Common myeloid progenitor, CD34-positive (primary cell): ENCODE measurements at regions of chr14 and their contacts with region 1.

Region 1: DNA sequence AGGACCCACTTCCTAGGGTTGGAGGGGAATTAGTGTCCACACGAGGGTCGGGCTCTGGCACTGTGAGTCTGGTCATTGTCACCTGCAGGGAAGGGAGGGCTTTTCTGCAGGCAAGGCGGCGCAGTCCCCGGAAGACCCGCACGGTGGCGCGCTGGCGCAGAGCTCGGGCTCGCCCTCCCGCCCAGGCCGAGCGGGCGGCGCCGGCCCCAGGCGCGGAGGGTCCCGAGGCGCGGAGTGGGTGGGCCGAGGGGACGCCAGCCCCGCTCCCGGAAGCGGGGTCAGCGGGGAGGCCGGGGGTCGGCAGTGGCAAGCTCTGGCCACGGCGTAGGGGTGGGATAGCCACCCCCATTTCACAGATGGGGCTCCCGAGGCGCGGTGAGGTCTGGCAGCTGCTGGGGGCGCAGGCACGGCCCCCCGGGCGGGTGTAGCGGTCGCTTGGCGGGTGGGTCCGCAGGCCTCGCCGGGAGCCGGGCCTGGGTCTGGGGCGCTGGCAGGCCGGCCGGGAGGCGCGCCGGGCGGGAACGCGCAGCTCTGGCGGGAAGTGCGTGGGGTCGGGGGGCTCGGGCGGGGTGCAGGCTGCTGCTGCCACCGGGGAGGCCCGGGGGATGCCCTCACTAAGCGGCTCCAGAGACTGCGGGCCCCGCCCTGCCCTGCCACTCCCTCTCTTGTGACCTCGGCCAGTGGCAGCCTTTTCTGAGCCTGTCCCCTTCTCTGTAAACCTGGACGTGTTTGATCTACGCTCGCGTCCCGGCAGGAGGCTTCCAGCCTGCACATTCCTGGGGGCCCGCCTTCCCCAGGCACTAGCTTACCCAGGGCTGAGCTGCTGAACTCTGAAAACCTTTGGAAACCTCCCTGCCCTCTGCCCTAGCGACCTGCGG is 46.1 kb downstream of the CYP46A1 start:
- DNase-seq: peak in 2 of 3 donors; percentile 50 to 57
- H3K4me3 ChIP-seq: peak overlapping the region in 1 of 7 experiments; percentile 42
- H3K27ac ChIP-seq: no peak overlapping the region
- H3K4me1 ChIP-seq: peaks cover 0 to 7% (median 4%) of the 10 kb centered on the region in 4 experiments
- H3K27me3 ChIP-seq: peaks cover 0 to 96% (median 18%) of the 10 kb centered on the region in 5 experiments

Region 2: GRCh38 chr14:99879401-99880295 is 149.4 kb after region 1 on chr14:
- CTCF ChIA-PET with region 1: interaction called, 19 read pairs
- POLR2A ChIA-PET with region 1: no interaction called
- DNase-seq: no peak
- H3K4me3 ChIP-seq: no peak overlapping the region
- H3K27ac ChIP-seq: no peak overlapping the region
- H3K4me1 ChIP-seq: no peaks in the 10 kb centered on the region
- H3K27me3 ChIP-seq: peaks cover 10 to 73% (median 27%) of the 10 kb centered on the region in 5 experiments

Region 3: GRCh38 chr14:99884834-99885648 is 154.8 kb after region 1 on chr14:
- CTCF ChIA-PET with region 1: interaction called, 19 read pairs
- POLR2A ChIA-PET with region 1: no interaction called
- DNase-seq: peak; percentile 60 to 82 (median 77)
- H3K4me3 ChIP-seq: no peak overlapping the region
- H3K27ac ChIP-seq: no peak overlapping the region
- H3K4me1 ChIP-seq: no peaks in the 10 kb centered on the region
- H3K27me3 ChIP-seq: peaks cover 9 to 48% (median 32%) of the 10 kb centered on the region in 5 experiments